WTC11 (cell line): ENCODE measurements at regions of chr15 and their contacts with region 1.

Region 1: DNA sequence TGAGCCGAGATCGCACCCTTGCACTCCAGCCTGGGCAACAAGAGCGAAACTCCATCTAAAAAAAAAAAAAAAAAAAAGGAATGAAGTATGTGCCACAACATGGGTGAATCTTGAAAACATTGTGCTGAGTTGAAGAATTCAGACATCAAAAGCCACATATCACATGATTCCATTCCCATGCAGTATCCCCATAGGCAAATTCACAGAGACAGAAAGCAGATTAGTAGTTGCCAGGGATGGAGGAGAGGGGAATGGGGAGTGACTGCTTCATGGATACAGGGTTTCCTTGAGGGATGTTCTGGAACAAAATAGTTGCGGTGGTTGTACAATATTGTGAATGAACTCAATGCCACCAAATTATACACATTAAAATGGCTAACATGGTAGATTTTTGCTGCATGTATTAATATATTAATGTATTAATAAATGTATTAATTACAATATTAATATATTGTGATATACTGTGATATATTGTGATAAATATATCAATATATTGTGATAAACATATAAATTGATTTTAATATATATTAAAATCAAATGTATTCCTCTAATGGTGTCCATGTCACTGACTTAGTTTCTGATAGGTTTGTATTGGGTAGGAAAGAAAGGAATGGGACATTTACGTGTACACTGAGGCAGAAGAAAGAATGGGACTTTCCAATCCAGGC is 34.9 kb downstream of the SMAD3 start:
- DNase-seq: no peak
- ATAC-seq: no peak
- H3K4me3 Mint-ChIP-seq: no peak overlapping the region
- H3K27ac Mint-ChIP-seq: no peak overlapping the region
- H3K4me1 Mint-ChIP-seq: peaks cover 32% of the 10 kb centered on the region
- H3K27me3 Mint-ChIP-seq: no peaks in the 10 kb centered on the region
- CTCF ChIP-seq: no peak

Region 2: DNA sequence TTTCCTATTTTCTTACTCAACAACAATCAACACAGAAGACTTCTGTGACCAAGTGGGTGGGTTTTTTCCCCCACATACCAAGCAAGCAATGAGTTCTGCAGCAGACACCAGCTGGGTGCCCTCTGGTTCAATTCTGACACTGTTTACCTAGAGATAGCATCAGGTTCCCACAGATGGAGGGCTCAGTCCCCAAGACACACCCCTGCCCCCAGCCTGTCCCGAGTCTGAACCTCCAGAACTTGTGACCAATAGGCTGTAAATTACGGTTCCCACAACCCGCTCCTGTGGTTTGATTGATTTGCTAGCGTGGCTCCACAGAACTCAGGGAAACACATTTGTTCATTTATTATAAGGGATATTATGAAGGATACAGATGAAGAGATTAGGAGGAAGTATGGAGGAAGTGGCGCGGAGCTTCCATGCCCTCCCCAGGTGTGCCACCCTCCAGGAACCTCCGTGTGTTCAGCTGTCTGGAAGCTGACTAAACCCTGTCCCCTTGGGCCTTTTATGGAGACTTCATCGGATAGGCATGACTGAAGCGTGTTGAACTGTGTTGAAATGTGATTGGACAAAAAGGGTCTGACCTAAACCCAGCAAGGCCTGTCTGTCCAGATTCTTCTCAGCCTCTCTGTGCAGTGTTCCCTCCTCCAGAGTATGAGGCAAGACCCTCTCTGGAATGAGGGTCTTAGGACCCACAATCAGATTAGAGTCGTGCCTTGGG is 1538.5 kb before region 1 on chr15:
- CTCF ChIA-PET with region 1: no interaction called
- POLR2A ChIA-PET with region 1: interaction called, 10 read pairs
- DNase-seq: no peak
- ATAC-seq: no peak
- H3K4me3 Mint-ChIP-seq: no peak overlapping the region
- H3K27ac Mint-ChIP-seq: no peak overlapping the region
- H3K4me1 Mint-ChIP-seq: no peaks in the 10 kb centered on the region
- H3K27me3 Mint-ChIP-seq: no peaks in the 10 kb centered on the region
- CTCF ChIP-seq: no peak

Region 3: GRCh38 chr15:67110361-67110781 is 10.1 kb after region 1 on chr15:
- CTCF ChIA-PET with region 1: no interaction called
- POLR2A ChIA-PET with region 1: no interaction called
- DNase-seq: no peak
- ATAC-seq: no peak
- H3K4me3 Mint-ChIP-seq: no peak overlapping the region
- H3K27ac Mint-ChIP-seq: no peak overlapping the region
- H3K4me1 Mint-ChIP-seq: peaks cover 46% of the 10 kb centered on the region
- H3K27me3 Mint-ChIP-seq: no peaks in the 10 kb centered on the region
- CTCF ChIP-seq: no peak